ENCODE measurements at regions of chr6 and their contacts with region 1.

Region 1: GRCh38 chr6:42901536-42901957 is 14.3 kb upstream of the PTCRA start:
- DNase-seq: no peak
- H3K4me3 ChIP-seq: peak overlapping the region in 1 of 2 donors; percentile 13
- H3K27ac ChIP-seq: peak overlapping the region; percentile 22
- H3K4me1 ChIP-seq: no peaks in the 10 kb centered on the region
- H3K27me3 ChIP-seq: no peaks in the 10 kb centered on the region
- CTCF ChIP-seq: peak; percentile 82 to 87 (median 87)
- POLR2A ChIP-seq: no peak

Region 2: GRCh38 chr6:42599558-42599957 is 302.0 kb before region 1 on chr6:
- intact Hi-C with region 1: no loop called
- DNase-seq: no peak
- H3K4me3 ChIP-seq: no peak overlapping the region
- H3K27ac ChIP-seq: no peak overlapping the region
- H3K4me1 ChIP-seq: no peaks in the 10 kb centered on the region
- H3K27me3 ChIP-seq: no peaks in the 10 kb centered on the region
- CTCF ChIP-seq: no peak
- POLR2A ChIP-seq: no peak

Region 3: DNA sequence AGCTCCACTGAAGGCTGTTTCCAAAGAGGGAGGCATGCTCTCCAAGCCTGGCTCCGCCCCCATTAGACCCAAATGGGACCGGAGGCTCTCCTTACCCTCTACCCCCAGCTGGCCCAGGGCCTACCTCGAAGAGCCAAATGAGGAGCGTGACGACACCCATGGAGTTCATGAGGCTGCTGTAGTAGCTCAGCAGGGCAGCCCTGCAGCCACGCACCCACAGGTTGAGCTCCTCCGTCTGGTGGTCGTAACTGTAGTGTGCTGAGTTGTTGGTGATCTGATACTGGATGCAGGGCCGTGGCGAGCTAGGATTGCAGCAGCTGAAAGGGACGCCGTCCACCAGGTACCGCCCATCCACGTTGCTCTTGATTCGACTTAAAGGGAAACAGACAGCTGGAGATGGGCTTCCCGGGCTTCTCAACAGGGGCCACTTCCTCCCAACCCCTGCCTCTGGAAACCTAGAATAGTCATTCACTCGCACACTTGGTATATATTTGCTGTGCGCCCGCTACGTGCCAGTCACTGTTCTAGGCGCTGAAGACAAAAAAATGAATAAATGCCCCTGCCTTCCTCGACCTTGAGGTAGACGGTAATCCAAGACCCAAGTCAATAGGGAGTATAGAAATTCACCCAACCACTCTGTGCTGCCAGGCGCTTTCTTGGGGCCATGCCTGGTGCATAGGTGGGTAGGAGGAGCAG is 197.2 kb before region 1 on chr6:
- intact Hi-C with region 1: no loop called
- DNase-seq: no peak
- H3K4me3 ChIP-seq: peak overlapping the region; percentile 34 to 35
- H3K27ac ChIP-seq: no peak overlapping the region
- H3K4me1 ChIP-seq: peaks cover 17% of the 10 kb centered on the region
- H3K27me3 ChIP-seq: no peaks in the 10 kb centered on the region
- CTCF ChIP-seq: no peak
- POLR2A ChIP-seq: no peak

Region 4: DNA sequence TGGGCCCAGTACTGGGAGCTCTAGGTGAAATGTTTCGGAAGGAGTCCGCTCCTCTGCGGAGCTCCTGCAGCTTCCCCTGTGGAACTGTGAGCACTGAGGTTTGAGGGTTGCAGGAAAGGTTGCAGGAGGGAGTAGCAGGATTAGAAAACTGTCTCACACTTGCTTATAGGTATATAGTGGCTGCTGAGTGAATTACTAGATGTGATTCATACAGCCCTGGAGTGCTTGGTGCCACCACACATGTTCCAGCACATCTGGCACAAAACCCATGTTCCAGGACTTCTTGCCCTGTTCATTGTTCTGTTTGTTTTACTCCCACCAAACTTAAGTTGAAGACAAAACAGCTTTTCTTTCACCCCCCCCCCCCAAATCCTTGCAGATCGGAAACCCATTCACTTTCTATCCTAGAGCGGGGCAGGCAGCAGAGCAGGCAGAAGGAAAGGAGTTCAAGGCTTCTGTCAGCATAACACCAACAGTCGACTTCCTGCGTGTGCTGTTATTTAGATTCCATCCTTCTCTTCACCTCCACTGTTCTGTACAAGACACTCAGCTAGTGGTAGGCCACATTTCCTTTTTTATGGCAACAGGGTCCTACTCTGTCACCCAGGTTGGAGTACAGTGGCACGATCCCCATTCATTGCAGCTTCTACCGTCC is 78.1 kb after region 1 on chr6:
- intact Hi-C with region 1: loop called (anchors 2 kb)
- DNase-seq: no peak
- H3K4me3 ChIP-seq: peak overlapping the region; percentile 71 to 83
- H3K27ac ChIP-seq: peak overlapping the region; percentile 89
- H3K4me1 ChIP-seq: peaks cover 49% of the 10 kb centered on the region
- H3K27me3 ChIP-seq: no peaks in the 10 kb centered on the region
- CTCF ChIP-seq: no peak
- POLR2A ChIP-seq: no peak

Region 5: GRCh38 chr6:43013843-43014433 is 112.4 kb after region 1 on chr6 and contains the starts of genes KLHDC3 and MEA1:
- intact Hi-C with region 1: loop called (anchors 10 kb)
- DNase-seq: peak; percentile 100
- H3K4me3 ChIP-seq: peak within 1 kb of the TSS; percentile 85 to 88
- H3K27ac ChIP-seq: peak within 1 kb of the TSS; percentile 87
- H3K4me1 ChIP-seq: peaks cover 52% of the 10 kb centered on the region
- H3K27me3 ChIP-seq: no peaks in the 10 kb centered on the region
- CTCF ChIP-seq: no peak
- POLR2A ChIP-seq: no peak
- total RNA-seq, gene KLHDC3: 52.1 TPM
- total RNA-seq, gene MEA1: 40.3 TPM

Region 6: GRCh38 chr6:43143235-43144124 is 241.9 kb after region 1 on chr6:
- intact Hi-C with region 1: loop called (anchors 5 kb)
- DNase-seq: no peak
- H3K4me3 ChIP-seq: no peak overlapping the region
- H3K27ac ChIP-seq: peak overlapping the region; percentile 67
- H3K4me1 ChIP-seq: peaks cover 12% of the 10 kb centered on the region
- H3K27me3 ChIP-seq: no peaks in the 10 kb centered on the region
- CTCF ChIP-seq: peak; percentile 78 to 94 (median 88)
- POLR2A ChIP-seq: no peak

Measured in vagina (tissue), 2 donors.